ENCODE measurements at regions of chr5 and their contacts with region 1.

Region 1: GRCh38 chr5:59367791-59368394 is 525.6 kb downstream of the PDE4D start:
- DNase-seq: peak in 1 of 2 donors; percentile 70
- ATAC-seq: peak in 7 of 8 donors; percentile 41 to 86 (median 72)
- H3K4me3 ChIP-seq: no peak overlapping the region
- H3K27ac ChIP-seq: no peak overlapping the region
- H3K4me1 ChIP-seq: peaks cover 0 to 8% (median 0%) of the 10 kb centered on the region in 9 donors
- H3K27me3 ChIP-seq: no peaks in the 10 kb centered on the region
- CTCF ChIP-seq: peak; percentile 50 to 89 (median 83)

Region 2: DNA sequence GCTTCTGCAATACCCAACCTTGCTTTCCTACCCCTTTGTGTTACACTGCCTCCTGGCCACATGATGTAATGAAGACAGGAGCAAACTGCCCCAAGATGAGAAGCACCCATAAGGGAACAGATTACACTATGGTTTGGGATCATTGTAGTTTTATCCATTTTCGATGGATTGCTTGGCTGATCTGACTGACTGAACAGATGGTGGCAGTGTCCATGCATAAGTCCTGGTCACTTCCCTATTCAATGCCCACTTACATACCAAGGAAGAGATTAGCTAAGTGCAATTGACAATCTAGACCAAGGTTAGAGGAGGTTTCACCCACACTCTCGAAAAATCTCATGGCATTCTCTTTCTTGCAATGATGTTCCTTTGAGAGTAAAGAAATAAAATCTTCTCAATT is 465.1 kb before region 1 on chr5:
- intact Hi-C with region 1: loop called in 1 of 10 experiments (anchors 10 kb)
- DNase-seq: no peak
- ATAC-seq: peak in 3 of 8 donors; percentile 44 to 63 (median 55)
- H3K4me3 ChIP-seq: no peak overlapping the region
- H3K27ac ChIP-seq: no peak overlapping the region
- H3K4me1 ChIP-seq: peaks cover 0 to 7% (median 0%) of the 10 kb centered on the region in 9 donors
- H3K27me3 ChIP-seq: no peaks in the 10 kb centered on the region
- CTCF ChIP-seq: peak in 4 of 9 donors; percentile 20 to 36 (median 30)

Region 3: GRCh38 chr5:59218424-59219045 is 149.4 kb before region 1 on chr5:
- intact Hi-C with region 1: loop called in 7 of 10 experiments (anchors 1 to 10 kb)
- DNase-seq: no peak
- ATAC-seq: no peak
- H3K4me3 ChIP-seq: no peak overlapping the region
- H3K27ac ChIP-seq: no peak overlapping the region
- H3K4me1 ChIP-seq: peaks cover 0 to 40% (median 9%) of the 10 kb centered on the region in 9 donors
- H3K27me3 ChIP-seq: no peaks in the 10 kb centered on the region
- CTCF ChIP-seq: peak in 8 of 9 donors; percentile 45 to 65 (median 53)

Measured in heart right ventricle (tissue), 16 donors.